ENCODE measurements at regions of chr16 and their contacts with region 1.

Region 1: DNA sequence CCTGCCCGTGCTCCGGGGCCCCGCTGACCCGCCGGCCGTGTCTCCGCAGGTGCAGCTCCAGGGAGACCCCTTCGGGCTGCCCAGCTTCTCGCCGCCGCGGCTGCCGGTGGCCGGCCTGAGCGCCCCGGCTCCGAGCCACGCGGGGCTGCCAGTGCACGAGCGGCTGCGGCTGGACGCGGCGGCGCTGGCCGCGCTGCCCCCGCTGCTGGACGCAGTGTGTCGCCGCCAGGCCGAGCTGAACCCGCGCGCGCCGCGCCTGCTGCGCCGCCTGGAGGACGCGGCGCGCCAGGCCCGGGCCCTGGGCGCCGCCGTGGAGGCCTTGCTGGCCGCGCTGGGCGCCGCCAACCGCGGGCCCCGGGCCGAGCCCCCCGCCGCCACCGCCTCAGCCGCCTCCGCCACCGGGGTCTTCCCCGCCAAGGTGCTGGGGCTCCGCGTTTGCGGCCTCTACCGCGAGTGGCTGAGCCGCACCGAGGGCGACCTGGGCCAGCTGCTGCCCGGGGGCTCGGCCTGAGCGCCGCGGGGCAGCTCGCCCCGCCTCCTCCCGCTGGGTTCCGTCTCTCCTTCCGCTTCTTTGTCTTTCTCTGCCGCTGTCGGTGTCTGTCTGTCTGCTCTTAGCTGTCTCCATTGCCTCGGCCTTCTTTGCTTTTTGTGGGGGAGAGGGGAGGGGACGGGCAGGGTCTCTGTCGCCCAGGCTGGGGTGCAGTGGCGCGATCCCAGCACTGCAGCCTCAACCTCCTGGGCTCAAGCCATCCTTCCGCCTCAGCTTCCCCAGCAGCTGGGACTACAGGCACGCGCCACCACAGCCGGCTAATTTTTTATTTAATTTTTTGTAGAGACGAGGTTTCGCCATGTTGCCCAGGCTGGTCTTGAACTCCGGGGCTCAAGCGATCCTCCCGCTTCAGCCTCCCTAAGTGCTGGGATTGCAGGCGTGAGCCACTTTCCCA is 5.9 kb downstream of the CTF1 start:
- DNase-seq: peak; percentile 61 to 92 (median 82)
- ATAC-seq: peak; percentile 88 to 96 (median 92)
- H3K4me3 ChIP-seq: peak overlapping the region; percentile 26 to 57 (median 50)
- H3K27ac ChIP-seq: peak overlapping the region; percentile 68 to 90 (median 88)
- H3K4me1 ChIP-seq: no peaks in the 10 kb centered on the region
- H3K27me3 ChIP-seq: no peaks in the 10 kb centered on the region
- CTCF ChIP-seq: peak in 1 of 4 donors; percentile 7

Region 2: DNA sequence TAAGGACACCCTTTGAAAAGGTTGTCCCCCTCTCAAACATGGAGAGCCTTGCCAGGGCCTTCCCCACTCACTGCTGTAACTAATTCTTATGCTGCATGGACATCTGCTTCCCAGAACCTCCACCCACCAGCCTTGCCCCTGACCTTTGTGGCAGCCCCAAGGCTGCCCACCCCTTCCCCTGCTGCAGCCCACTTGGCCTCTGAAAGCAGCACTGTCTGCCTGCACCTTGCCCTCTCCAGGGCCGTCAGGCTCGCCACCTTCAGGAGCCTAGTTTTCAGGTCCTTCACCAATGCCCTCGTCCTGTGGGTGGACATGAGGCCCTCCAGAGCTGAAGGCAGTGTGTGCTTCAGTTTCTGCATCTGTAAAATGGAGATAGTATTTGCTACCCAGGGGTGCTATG is 721.6 kb before region 1 on chr16:
- intact Hi-C with region 1: no loop called
- DNase-seq: peak in 1 of 6 donors; percentile 35
- ATAC-seq: no peak
- H3K4me3 ChIP-seq: no peak overlapping the region
- H3K27ac ChIP-seq: no peak overlapping the region
- H3K4me1 ChIP-seq: no peaks in the 10 kb centered on the region
- H3K27me3 ChIP-seq: no peaks in the 10 kb centered on the region
- CTCF ChIP-seq: no peak

Region 3: GRCh38 chr16:30829130-30830071 is 72.9 kb before region 1 on chr16:
- intact Hi-C with region 1: loop called in 1 of 3 experiments (anchors 10 kb)
- DNase-seq: peak in 1 of 6 donors; percentile 30
- ATAC-seq: peak in 3 of 4 donors; percentile 25 to 41 (median 38)
- H3K4me3 ChIP-seq: no peak overlapping the region
- H3K27ac ChIP-seq: no peak overlapping the region
- H3K4me1 ChIP-seq: no peaks in the 10 kb centered on the region
- H3K27me3 ChIP-seq: no peaks in the 10 kb centered on the region
- CTCF ChIP-seq: no peak

Measured in pancreas (tissue), 10 donors.